Caco-2 (cell line): ENCODE measurements at regions of chr5 and their contacts with region 1.

Region 1: DNA sequence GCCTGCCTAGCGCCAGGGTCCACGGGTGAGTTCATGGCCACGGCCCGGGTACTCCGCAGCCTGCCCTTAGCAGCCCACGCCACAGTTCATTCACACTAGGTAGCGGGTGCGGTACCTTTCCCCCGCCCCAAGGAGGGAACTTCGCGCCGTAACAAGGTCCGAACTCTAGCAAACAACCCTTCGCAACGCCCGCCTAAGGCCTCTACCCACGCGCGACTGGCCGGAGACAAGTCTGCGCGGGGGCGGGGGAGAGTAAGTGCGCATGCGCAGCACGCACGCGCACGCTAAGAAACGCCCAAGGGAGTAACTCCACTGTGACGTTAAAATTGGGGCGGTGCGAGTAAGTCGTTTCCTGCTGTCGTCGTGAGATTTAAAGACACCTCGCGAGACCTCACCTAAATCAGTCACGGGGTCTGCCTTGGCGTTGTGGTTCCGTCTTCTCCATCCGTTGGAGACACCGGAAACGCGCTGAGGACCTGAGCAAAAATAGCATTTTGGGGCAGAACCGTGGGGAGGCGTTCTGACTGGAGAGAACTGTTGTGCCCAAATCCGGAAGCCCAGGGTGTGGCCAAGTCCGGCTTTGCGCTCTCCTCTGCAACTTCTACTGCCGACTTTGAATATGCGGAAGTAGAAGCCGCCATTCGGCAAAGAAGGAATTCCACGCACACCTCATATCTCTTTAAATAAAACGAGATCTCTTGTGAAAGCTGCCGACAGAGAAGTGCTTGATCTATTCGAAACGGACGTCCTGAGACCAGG is at the start of gene RAPGEF6:
- DNase-seq: peak; percentile 96 to 99
- H3K4me3 ChIP-seq: peak within 1 kb of the TSS; percentile 74
- H3K4me3 Mint-ChIP-seq: peak within 1 kb of the TSS; percentile 95
- H3K27ac Mint-ChIP-seq: peak within 1 kb of the TSS; percentile 95
- H3K4me1 ChIP-seq: peaks cover 5% of the 10 kb centered on the region
- H3K4me1 Mint-ChIP-seq: no peaks in the 10 kb centered on the region
- H3K27me3 ChIP-seq: no peaks in the 10 kb centered on the region
- H3K27me3 Mint-ChIP-seq: no peaks in the 10 kb centered on the region
- CTCF ChIP-seq: no peak
- total RNA-seq, gene RAPGEF6: 17.4 and 22.4 TPM in 2 replicates

Region 2: GRCh38 chr5:131589510-131590348 is 45.4 kb before region 1 on chr5:
- CTCF ChIA-PET with region 1: interaction called, 9 read pairs
- POLR2A ChIA-PET with region 1: interaction called, 3 read pairs
- intact Hi-C with region 1: loop called (anchors 1 kb)
- DNase-seq: peak; percentile 58 to 66
- H3K4me3 ChIP-seq: no peak overlapping the region
- H3K4me3 Mint-ChIP-seq: no peak overlapping the region
- H3K27ac Mint-ChIP-seq: peak overlapping the region; percentile 61
- H3K4me1 ChIP-seq: peaks cover 10% of the 10 kb centered on the region
- H3K4me1 Mint-ChIP-seq: peaks cover 18% of the 10 kb centered on the region
- H3K27me3 ChIP-seq: no peaks in the 10 kb centered on the region
- H3K27me3 Mint-ChIP-seq: no peaks in the 10 kb centered on the region
- CTCF ChIP-seq: peak; percentile 77 to 82

Region 3: GRCh38 chr5:131610198-131611063 is 24.7 kb before region 1 on chr5:
- CTCF ChIA-PET with region 1: no interaction called
- POLR2A ChIA-PET with region 1: interaction called, 4 read pairs
- intact Hi-C with region 1: loop called (anchors 1 kb)
- DNase-seq: peak; percentile 47 to 54
- H3K4me3 ChIP-seq: no peak overlapping the region
- H3K4me3 Mint-ChIP-seq: no peak overlapping the region
- H3K27ac Mint-ChIP-seq: peak overlapping the region; percentile 87
- H3K4me1 ChIP-seq: peaks cover 44% of the 10 kb centered on the region
- H3K4me1 Mint-ChIP-seq: peaks cover 32% of the 10 kb centered on the region
- H3K27me3 ChIP-seq: no peaks in the 10 kb centered on the region
- H3K27me3 Mint-ChIP-seq: no peaks in the 10 kb centered on the region
- CTCF ChIP-seq: no peak

Region 4: GRCh38 chr5:131796793-131797693 is 161.9 kb after region 1 on chr5 and contains the start of gene FNIP1:
- CTCF ChIA-PET with region 1: no interaction called
- POLR2A ChIA-PET with region 1: interaction called, 3 read pairs
- intact Hi-C with region 1: loop called (anchors 1 kb)
- DNase-seq: peak; percentile 100
- H3K4me3 ChIP-seq: peak within 1 kb of the TSS; percentile 94
- H3K4me3 Mint-ChIP-seq: peak within 1 kb of the TSS; percentile 95
- H3K27ac Mint-ChIP-seq: peak within 1 kb of the TSS; percentile 90
- H3K4me1 ChIP-seq: peaks cover 5% of the 10 kb centered on the region
- H3K4me1 Mint-ChIP-seq: peaks cover 7% of the 10 kb centered on the region
- H3K27me3 ChIP-seq: no peaks in the 10 kb centered on the region
- H3K27me3 Mint-ChIP-seq: peaks cover 6% of the 10 kb centered on the region
- CTCF ChIP-seq: peak in 1 of 2 experiments; percentile 30
- total RNA-seq, gene FNIP1: 42.7 and 45.0 TPM in 2 replicates